Right ventricle myocardium superior (tissue), 1 donor: ENCODE measurements at regions of chr2 and their contacts with region 1.

Region 1: DNA sequence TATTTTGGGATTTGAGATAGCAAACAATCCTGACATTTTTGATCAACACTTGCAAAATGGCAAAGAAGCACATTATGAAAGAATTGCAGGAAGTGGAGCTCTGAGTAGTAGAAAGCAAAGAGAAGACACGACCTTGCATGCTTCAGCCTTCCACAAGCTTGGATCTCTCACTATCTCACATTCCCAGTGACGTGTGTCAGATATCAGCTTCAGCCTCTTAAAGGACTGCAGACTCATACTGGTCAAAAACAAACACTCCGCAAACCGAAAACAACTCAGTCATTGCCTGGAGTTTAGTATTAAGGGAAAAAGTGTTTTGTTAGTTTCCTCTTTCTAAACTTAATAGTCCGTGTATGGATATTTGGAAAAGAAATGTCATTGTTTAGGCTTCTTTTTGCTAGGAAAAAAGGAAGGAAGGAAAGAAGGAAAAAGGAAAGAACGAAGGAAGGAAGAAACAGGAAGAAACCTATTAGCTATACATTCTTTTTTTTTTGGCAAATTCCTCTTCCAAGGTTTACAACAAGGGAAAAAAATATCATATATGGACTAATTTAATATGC is 32.6 kb upstream of the SLC40A1 start:
- DNase-seq: no peak
- ATAC-seq: peak; percentile 97

Region 2: GRCh38 chr2:189247276-189247675 is 365.9 kb before region 1 on chr2:
- intact Hi-C with region 1: no loop called
- DNase-seq: no peak
- ATAC-seq: no peak

Region 3: GRCh38 chr2:189534854-189535832 is 78.0 kb before region 1 on chr2:
- intact Hi-C with region 1: no loop called
- DNase-seq: no peak
- ATAC-seq: peak; percentile 66

Region 4: GRCh38 chr2:189580658-189581353 is 32.4 kb before region 1 on chr2 and contains the start of gene SLC40A1:
- intact Hi-C with region 1: loop called (anchors 2 kb)
- DNase-seq: peak; percentile 90
- ATAC-seq: peak; percentile 98
- total RNA-seq, gene SLC40A1: 48.2 TPM